MCF 10A (cell line): ENCODE measurements at regions of chr1 and their contacts with region 1.

Region 1: GRCh38 chr1:37682334-37682987 is 9.9 kb upstream of the CDCA8 start:
- DNase-seq: peak; percentile 76
- H3K4me3 Mint-ChIP-seq: no peak overlapping the region
- H3K27ac Mint-ChIP-seq: no peak overlapping the region
- H3K4me1 Mint-ChIP-seq: peaks cover 11% of the 10 kb centered on the region
- H3K27me3 Mint-ChIP-seq: no peaks in the 10 kb centered on the region
- CTCF ChIP-seq: peak; percentile 91

Region 2: DNA sequence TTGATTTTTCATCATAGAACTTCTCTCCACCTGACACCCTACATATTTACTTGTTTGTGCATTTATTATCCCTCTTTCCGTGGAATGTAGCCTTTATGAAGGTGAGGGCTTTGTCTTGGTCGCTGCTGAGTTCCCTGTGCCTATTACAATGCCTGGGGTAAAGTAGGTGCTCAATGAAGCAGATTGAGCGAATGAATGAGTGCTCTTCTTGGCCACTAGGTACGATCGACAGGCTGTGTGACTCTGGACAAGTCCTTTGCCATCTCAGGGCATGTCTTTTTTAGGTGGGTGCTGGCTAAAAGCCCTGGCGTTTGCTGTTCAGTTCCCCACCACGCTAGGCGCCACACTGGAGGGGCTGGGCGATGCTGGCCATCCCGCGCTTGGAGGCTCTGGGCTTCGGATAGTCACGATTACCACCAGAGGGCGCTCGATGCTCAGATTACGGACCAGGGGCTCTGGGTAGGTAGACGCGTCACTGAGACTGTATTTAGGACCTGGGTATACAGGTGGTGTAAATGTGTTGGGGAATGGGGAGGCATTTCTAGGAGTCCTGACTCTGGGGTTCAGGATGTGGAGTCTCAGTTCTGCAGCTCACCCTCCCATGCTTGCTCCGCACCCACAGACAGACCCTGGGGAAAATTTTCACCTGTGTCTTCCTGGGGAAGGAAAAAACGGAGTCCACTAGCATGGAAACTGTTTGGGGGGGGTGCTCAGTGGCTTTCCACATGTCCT is 1128.7 kb before region 1 on chr1:
- CTCF ChIA-PET with region 1: no interaction called
- POLR2A ChIA-PET with region 1: no interaction called
- intact Hi-C with region 1: loop called (anchors 1 kb)
- DNase-seq: peak; percentile 83
- H3K4me3 Mint-ChIP-seq: no peak overlapping the region
- H3K27ac Mint-ChIP-seq: no peak overlapping the region
- H3K4me1 Mint-ChIP-seq: no peaks in the 10 kb centered on the region
- H3K27me3 Mint-ChIP-seq: peaks cover 73% of the 10 kb centered on the region
- CTCF ChIP-seq: peak; percentile 81

Region 3: GRCh38 chr1:37449936-37450335 is 232.5 kb before region 1 on chr1:
- CTCF ChIA-PET with region 1: interaction called, 37 read pairs
- POLR2A ChIA-PET with region 1: no interaction called
- intact Hi-C with region 1: loop called (anchors 1 kb)
- DNase-seq: no peak
- H3K4me3 Mint-ChIP-seq: no peak overlapping the region
- H3K27ac Mint-ChIP-seq: peak overlapping the region; percentile 54
- H3K4me1 Mint-ChIP-seq: peaks cover 12% of the 10 kb centered on the region
- H3K27me3 Mint-ChIP-seq: no peaks in the 10 kb centered on the region
- CTCF ChIP-seq: no peak

Region 4: GRCh38 chr1:37514350-37515184 is 167.9 kb before region 1 on chr1 and contains the start of gene MEAF6:
- CTCF ChIA-PET with region 1: interaction called, 11 read pairs
- POLR2A ChIA-PET with region 1: no interaction called
- intact Hi-C with region 1: no loop called
- DNase-seq: peak; percentile 80
- H3K4me3 Mint-ChIP-seq: peak within 1 kb of the TSS; percentile 82
- H3K27ac Mint-ChIP-seq: peak within 1 kb of the TSS; percentile 82
- H3K4me1 Mint-ChIP-seq: peaks cover 16% of the 10 kb centered on the region
- H3K27me3 Mint-ChIP-seq: no peaks in the 10 kb centered on the region
- CTCF ChIP-seq: peak; percentile 72
- total RNA-seq, gene MEAF6: 71.3 and 72.0 TPM in 2 replicates

Region 5: GRCh38 chr1:37602750-37603694 is 79.4 kb before region 1 on chr1:
- CTCF ChIA-PET with region 1: interaction called, 271 read pairs
- POLR2A ChIA-PET with region 1: interaction called, 3 read pairs
- intact Hi-C with region 1: loop called (anchors 1 kb)
- DNase-seq: peak; percentile 60
- H3K4me3 Mint-ChIP-seq: no peak overlapping the region
- H3K27ac Mint-ChIP-seq: no peak overlapping the region
- H3K4me1 Mint-ChIP-seq: no peaks in the 10 kb centered on the region
- H3K27me3 Mint-ChIP-seq: no peaks in the 10 kb centered on the region
- CTCF ChIP-seq: peak; percentile 64

Region 6: GRCh38 chr1:37701051-37701450 is 18.6 kb after region 1 on chr1:
- CTCF ChIA-PET with region 1: no interaction called
- POLR2A ChIA-PET with region 1: no interaction called
- intact Hi-C with region 1: no loop called
- DNase-seq: no peak
- H3K4me3 Mint-ChIP-seq: no peak overlapping the region
- H3K27ac Mint-ChIP-seq: no peak overlapping the region
- H3K4me1 Mint-ChIP-seq: no peaks in the 10 kb centered on the region
- H3K27me3 Mint-ChIP-seq: no peaks in the 10 kb centered on the region
- CTCF ChIP-seq: no peak